Activated T-helper 2 cell treated with anti-CD3 and anti-CD28 coated beads, Interferon-gamma antibody, Interleukin-2, Interleukin-4, amounts not matched to agents 10 μg/mL and 5 μg/mL and 100 μg/mL, durations not matched to agents 14 hours and 24 hours and 36 hours (primary cell): ENCODE measurements at regions of chr22 and their contacts with region 1.

Region 1: DNA sequence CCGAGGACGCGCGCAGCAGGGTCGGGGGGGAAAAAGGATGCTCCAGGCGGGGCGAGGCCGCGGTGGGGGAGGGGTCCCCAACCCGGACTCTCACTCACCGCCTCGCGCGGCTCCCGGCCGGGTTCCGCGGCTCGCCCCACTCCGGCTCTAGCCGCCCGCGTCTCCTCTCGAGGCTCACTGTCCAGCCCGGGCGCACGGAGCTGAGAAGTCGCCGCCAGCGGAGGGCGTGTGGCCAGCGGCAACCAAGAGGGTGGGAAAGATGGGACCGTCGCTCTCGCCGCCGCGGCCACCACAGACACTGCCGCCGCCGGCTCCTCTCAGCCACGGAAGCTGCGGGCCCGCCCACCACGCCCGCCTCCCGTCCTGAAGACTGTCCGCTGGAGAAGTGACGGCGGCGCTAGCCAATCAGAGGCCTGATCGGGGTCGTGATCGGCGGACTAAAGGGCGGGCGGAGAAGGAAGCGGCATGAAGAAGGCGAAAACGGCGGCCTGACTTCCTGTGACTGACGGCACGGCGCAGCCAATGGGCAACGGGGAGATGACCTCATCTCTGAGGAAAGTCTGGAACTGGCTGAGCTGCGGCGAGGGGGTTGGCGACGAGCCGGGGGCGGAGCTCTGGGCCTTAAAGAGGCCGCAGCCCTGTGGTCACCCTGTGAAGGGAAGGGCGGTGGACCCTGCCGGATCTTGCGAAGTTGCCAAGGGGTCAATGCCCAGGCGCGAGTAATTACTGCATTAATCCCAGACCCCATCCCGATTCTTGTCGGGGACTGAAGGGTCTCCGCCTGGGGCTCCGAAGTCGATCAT is at the start of gene MRTFA:
- DNase-seq: peak; percentile 100
- H3K4me3 Mint-ChIP-seq: peak within 1 kb of the TSS; percentile 94
- H3K27ac Mint-ChIP-seq: peak within 1 kb of the TSS; percentile 96
- H3K4me1 Mint-ChIP-seq: peaks cover 24% of the 10 kb centered on the region
- H3K27me3 Mint-ChIP-seq: no peaks in the 10 kb centered on the region
- total RNA-seq, gene MRTFA: 48.9 and 51.6 TPM in 2 replicates

Region 2: DNA sequence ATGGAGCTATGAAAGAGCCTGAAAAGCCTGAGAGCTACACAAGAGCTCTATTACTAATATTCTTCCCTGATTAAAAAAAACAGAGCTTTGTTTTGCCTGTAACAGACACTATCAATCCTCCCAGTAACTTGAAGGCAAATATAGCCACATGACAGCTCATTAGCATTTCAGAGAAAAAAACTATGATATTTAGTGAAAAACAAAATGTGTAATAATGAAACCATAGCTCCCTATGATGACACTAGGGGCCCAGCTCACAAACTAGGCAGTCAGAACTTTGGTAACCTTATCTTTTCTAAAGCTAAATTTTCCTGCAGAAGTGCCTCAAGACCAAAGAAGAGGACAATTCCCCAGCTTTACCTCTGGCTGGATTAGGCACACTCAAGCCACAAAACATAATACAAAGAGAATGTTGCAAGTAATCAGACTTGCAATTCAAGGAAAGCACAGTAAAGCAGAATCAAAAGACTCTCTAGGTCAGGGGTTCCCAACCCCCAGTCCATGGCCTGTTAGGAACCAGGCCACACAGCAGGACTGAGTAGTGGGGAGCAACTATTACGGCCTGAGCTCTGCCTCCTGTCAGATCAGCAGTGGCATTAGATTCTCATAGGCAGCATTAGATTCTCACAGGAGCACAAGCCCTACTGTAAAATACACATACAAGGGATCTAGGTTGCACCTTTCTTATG is 53.4 kb before region 1 on chr22:
- intact Hi-C with region 1: loop called (anchors 5 kb)
- DNase-seq: no peak
- H3K4me3 Mint-ChIP-seq: peak overlapping the region; percentile 27
- H3K27ac Mint-ChIP-seq: peak overlapping the region; percentile 84
- H3K4me1 Mint-ChIP-seq: peaks cover 43% of the 10 kb centered on the region
- H3K27me3 Mint-ChIP-seq: no peaks in the 10 kb centered on the region